HCT116 (cell line): ENCODE measurements at regions of chr5 and their contacts with region 1.

Region 1: GRCh38 chr5:141412854-141413539 is at the start of gene PCDHGA10:
- DNase-seq: peak; percentile 71
- ATAC-seq: peak; percentile 89
- H3K4me3 ChIP-seq: peak within 1 kb of the TSS; percentile 46 to 61
- H3K27ac ChIP-seq: peak within 1 kb of the TSS; percentile 44
- H3K4me1 ChIP-seq: peaks cover 2 to 5% of the 10 kb centered on the region in 2 experiments; a peak in 1 of 4 replicates
- H3K27me3 ChIP-seq: no peaks in the 10 kb centered on the region
- CTCF ChIP-seq: peak; percentile 84 to 96 (median 86)
- POLR2A ChIP-seq: no peak
- RAD21 ChIP-seq: peak; percentile 94
- total RNA-seq, gene PCDHGA10: 3.8 TPM

Region 2: DNA sequence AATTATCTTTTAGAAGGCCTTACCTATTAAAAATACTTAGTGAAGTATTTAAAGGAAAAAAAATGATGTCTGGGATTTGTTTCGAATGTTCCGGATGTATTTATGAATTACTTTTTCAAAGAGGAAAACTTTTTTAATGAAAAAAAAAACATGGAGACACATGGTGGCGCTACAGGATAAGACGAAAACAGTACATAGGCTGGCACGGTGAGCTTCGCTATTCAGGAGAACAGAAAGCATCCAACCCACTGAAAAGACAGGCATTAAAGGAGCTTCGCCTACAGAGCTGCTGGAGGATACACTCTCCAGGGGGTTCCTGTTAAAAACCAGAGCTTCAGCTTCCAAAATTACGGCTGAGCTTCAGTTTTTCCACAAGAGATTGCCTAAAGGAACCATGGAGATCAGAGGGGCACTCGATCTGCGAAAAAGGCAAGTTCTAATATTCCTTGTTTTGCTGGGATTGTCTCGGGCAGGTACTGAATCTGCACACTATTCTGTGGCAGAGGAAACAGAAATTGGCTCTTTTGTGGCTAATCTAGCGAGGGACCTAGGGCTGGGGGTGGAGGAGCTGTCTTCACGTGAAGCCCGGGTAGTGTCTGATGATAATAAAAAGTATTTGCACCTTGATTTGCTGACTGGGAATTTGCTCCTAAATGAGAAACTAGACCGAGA is 189.7 kb before region 1 on chr5 and contains the start of gene PCDHB14:
- CTCF ChIA-PET with region 1: interaction called, 10 read pairs
- POLR2A ChIA-PET with region 1: no interaction called
- RAD21 ChIA-PET with region 1: no interaction called
- intact Hi-C with region 1: no loop called
- DNase-seq: peak; percentile 38
- ATAC-seq: no peak
- H3K4me3 ChIP-seq: no peak within 1 kb of the TSS
- H3K27ac ChIP-seq: no peak within 1 kb of the TSS
- H3K4me1 ChIP-seq: no peaks in the 10 kb centered on the region
- H3K27me3 ChIP-seq: no peaks in the 10 kb centered on the region
- CTCF ChIP-seq: peak; percentile 14 to 46 (median 42); a peak in 2 of 6 replicates
- POLR2A ChIP-seq: no peak
- RAD21 ChIP-seq: peak; percentile 69
- total RNA-seq, gene PCDHB14: 0.27 TPM

Region 3: DNA sequence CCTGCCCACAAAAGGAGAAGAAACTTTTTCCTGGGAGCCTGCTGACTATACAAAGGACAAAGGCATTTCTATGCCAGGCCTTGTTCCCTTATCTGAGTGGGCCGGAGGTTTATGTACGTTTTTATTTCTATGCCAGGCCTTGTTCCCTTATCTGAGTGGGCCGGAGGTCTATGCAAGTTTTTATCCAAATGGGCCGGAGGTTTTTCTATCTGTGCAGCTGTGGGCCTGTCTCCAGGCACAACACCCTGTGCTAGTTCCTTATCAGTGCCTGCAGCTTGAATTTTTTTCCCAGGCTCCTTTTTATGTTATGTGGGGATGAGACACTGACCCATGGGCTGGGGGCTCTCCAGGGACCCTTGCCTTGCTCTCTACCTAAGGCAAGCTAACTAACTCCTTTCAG is 114.6 kb before region 1 on chr5:
- CTCF ChIA-PET with region 1: no interaction called
- POLR2A ChIA-PET with region 1: no interaction called
- RAD21 ChIA-PET with region 1: no interaction called
- intact Hi-C with region 1: no loop called
- DNase-seq: no peak
- ATAC-seq: no peak
- H3K4me3 ChIP-seq: no peak overlapping the region
- H3K27ac ChIP-seq: no peak overlapping the region
- H3K4me1 ChIP-seq: no peaks in the 10 kb centered on the region
- H3K27me3 ChIP-seq: no peaks in the 10 kb centered on the region
- CTCF ChIP-seq: no peak
- POLR2A ChIP-seq: no peak
- RAD21 ChIP-seq: no peak

Region 4: GRCh38 chr5:141512390-141512910 is 99.5 kb after region 1 on chr5:
- CTCF ChIA-PET with region 1: interaction called, 11 read pairs
- POLR2A ChIA-PET with region 1: no interaction called
- RAD21 ChIA-PET with region 1: no interaction called
- intact Hi-C with region 1: loop called (anchors 2 kb)
- DNase-seq: peak; percentile 32
- ATAC-seq: peak; percentile 80
- H3K4me3 ChIP-seq: no peak overlapping the region
- H3K27ac ChIP-seq: no peak overlapping the region
- H3K4me1 ChIP-seq: peaks cover 0 to 9% of the 10 kb centered on the region in 2 experiments; a peak in 2 of 4 replicates
- H3K27me3 ChIP-seq: no peaks in the 10 kb centered on the region
- CTCF ChIP-seq: peak; percentile 56 to 90 (median 80); a peak in 5 of 6 replicates
- POLR2A ChIP-seq: no peak
- RAD21 ChIP-seq: peak; percentile 49